ENCODE measurements at regions of chr1 and their contacts with region 1.

Region 1: DNA sequence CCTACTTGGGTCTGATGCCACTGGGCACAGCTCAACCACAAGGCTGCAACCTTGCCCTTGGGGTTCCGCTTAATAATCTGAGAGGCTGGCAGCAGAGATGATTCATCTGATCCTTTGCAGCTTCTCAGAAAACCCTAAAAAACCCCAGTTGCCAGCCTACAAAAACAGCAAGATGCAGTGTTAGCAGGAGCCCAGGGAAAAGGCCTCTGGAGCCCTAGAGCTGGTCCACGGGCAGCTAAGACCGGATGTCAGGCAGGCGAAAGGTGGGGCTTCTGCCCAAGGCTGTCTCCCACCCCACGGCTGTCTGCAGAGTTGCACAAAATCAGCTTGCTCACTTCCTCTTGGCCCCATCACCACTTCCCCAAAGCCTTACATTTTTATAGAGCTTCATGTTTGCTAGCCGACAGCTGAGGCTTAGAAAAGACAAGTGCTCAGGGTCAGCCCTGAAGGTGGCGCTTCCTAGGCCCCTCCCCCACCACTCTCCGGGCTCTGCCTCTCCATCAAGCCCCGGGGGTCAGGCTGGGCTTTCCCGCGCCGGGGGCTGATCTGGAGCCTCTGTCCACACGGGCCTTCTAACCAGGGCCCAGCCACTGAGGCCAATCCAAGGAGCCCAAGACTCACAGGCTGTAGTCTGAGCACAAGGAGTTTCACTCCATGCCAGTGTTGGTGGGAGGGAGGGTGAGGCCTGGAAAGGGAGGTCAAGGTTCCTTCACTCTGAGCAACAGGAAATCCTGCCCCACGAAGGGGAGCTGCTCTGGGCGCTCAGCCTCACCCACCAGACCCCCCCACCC is 4.2 kb upstream of the ADORA3 start:
- DNase-seq: peak; percentile 35 to 62 (median 40)
- ATAC-seq: peak; percentile 76
- H3K4me3 ChIP-seq: peak overlapping the region; percentile 53
- H3K4me3 Mint-ChIP-seq: peak overlapping the region; percentile 72 to 86 (median 82)
- H3K27ac ChIP-seq: peak overlapping the region; percentile 74
- H3K27ac Mint-ChIP-seq: peak overlapping the region in 8 of 9 donors; percentile 88 to 97 (median 94)
- H3K4me1 ChIP-seq: peaks cover 64 to 83% of the 10 kb centered on the region in 2 donors
- H3K4me1 Mint-ChIP-seq: peaks cover 42 to 65% (median 60%) of the 10 kb centered on the region in 7 donors
- H3K27me3 ChIP-seq: no peaks in the 10 kb centered on the region
- H3K27me3 Mint-ChIP-seq: no peaks in the 10 kb centered on the region

Region 2: DNA sequence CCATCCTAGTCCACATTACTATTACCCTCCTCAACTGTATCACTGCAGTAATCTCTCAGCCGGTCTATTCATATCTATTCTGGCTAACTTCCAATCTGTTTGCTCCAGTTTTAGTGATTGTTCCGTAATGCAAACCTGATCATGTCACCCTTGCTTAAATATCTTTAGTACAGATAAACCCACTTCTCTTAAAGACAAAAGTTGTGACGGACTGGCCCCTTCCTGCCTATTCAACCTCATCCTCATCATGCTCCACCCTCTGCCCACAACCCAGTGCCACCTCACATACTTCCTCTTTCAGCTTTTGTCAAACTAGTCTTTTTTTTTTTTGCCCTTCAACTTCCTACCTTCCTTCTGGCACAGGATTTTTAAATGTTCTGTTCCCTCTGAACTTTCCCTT is 36.6 kb before region 1 on chr1:
- CTCF ChIA-PET with region 1: interaction called, 83 read pairs
- POLR2A ChIA-PET with region 1: interaction called, 21 read pairs
- intact Hi-C with region 1: loop called in 1 of 2 experiments (anchors 5 kb)
- DNase-seq: peak in 8 of 9 donors; percentile 40 to 89 (median 84)
- ATAC-seq: peak; percentile 96
- H3K4me3 ChIP-seq: peak overlapping the region; percentile 37
- H3K4me3 Mint-ChIP-seq: no peak overlapping the region
- H3K27ac ChIP-seq: peak overlapping the region; percentile 68
- H3K27ac Mint-ChIP-seq: no peak overlapping the region
- H3K4me1 ChIP-seq: peaks cover 45 to 49% of the 10 kb centered on the region in 2 donors
- H3K4me1 Mint-ChIP-seq: peaks cover 10 to 26% (median 15%) of the 10 kb centered on the region in 7 donors
- H3K27me3 ChIP-seq: no peaks in the 10 kb centered on the region
- H3K27me3 Mint-ChIP-seq: no peaks in the 10 kb centered on the region

Region 3: DNA sequence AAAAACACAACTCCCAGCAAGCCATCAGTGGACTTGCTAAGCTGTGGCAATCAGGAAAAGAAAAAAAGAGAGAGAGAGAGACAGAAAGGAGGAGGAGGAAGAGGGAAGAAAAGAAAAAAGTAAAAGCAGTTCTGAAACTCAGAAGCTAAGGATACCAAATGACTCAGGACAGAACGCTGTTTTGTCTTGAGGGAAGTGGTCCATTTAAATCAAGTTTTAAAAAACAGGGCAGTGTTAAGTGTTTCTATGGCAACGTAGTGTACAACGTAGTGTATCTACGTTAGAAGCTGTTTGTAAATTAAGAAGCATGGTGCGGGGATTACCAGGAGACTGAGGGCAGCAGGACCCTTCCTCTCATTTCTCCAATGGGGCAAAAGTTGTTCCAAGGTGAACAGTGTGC is 10.0 kb before region 1 on chr1:
- CTCF ChIA-PET with region 1: interaction called, 15 read pairs
- POLR2A ChIA-PET with region 1: interaction called, 10 read pairs
- intact Hi-C with region 1: no loop called
- DNase-seq: no peak
- ATAC-seq: peak; percentile 42
- H3K4me3 ChIP-seq: no peak overlapping the region
- H3K4me3 Mint-ChIP-seq: peak overlapping the region in 1 of 10 donors; percentile 40
- H3K27ac ChIP-seq: no peak overlapping the region
- H3K27ac Mint-ChIP-seq: peak overlapping the region in 1 of 9 donors; percentile 36
- H3K4me1 ChIP-seq: no peaks in the 10 kb centered on the region
- H3K4me1 Mint-ChIP-seq: peaks cover 6 to 28% (median 13%) of the 10 kb centered on the region in 7 donors
- H3K27me3 ChIP-seq: no peaks in the 10 kb centered on the region
- H3K27me3 Mint-ChIP-seq: peaks cover 0 to 4% (median 0%) of the 10 kb centered on the region in 5 donors

Region 4: GRCh38 chr1:111582644-111583618 is 75.3 kb after region 1 on chr1:
- CTCF ChIA-PET with region 1: no interaction called
- POLR2A ChIA-PET with region 1: no interaction called
- intact Hi-C with region 1: no loop called
- DNase-seq: no peak
- ATAC-seq: no peak
- H3K4me3 ChIP-seq: no peak overlapping the region
- H3K4me3 Mint-ChIP-seq: no peak overlapping the region
- H3K27ac ChIP-seq: no peak overlapping the region
- H3K27ac Mint-ChIP-seq: no peak overlapping the region
- H3K4me1 ChIP-seq: peaks cover 5 to 9% of the 10 kb centered on the region in 2 donors
- H3K4me1 Mint-ChIP-seq: peaks cover 0 to 19% (median 7%) of the 10 kb centered on the region in 7 donors
- H3K27me3 ChIP-seq: no peaks in the 10 kb centered on the region
- H3K27me3 Mint-ChIP-seq: no peaks in the 10 kb centered on the region

Region 5: GRCh38 chr1:111619635-111620440 is 112.2 kb after region 1 on chr1 and contains the start of gene RAP1A:
- CTCF ChIA-PET with region 1: interaction called, 8 read pairs
- POLR2A ChIA-PET with region 1: interaction called, 14 read pairs
- intact Hi-C with region 1: loop called (anchors 1 kb)
- DNase-seq: peak; percentile 80 to 95 (median 90)
- ATAC-seq: peak; percentile 93
- H3K4me3 ChIP-seq: peak within 1 kb of the TSS; percentile 88
- H3K4me3 Mint-ChIP-seq: peak within 1 kb of the TSS; percentile 93 to 99 (median 96)
- H3K27ac ChIP-seq: peak within 1 kb of the TSS; percentile 91
- H3K27ac Mint-ChIP-seq: peak within 1 kb of the TSS; percentile 86 to 98 (median 95)
- H3K4me1 ChIP-seq: peaks cover 46 to 64% of the 10 kb centered on the region in 2 donors
- H3K4me1 Mint-ChIP-seq: peaks cover 57 to 82% (median 76%) of the 10 kb centered on the region in 7 donors
- H3K27me3 ChIP-seq: no peaks in the 10 kb centered on the region
- H3K27me3 Mint-ChIP-seq: no peaks in the 10 kb centered on the region
- total RNA-seq, gene RAP1A: 89.8 to 183 (median 107) TPM

Region 6: GRCh38 chr1:111656086-111657017 is 148.7 kb after region 1 on chr1:
- CTCF ChIA-PET with region 1: interaction called, 4 read pairs
- POLR2A ChIA-PET with region 1: interaction called, 5 read pairs
- intact Hi-C with region 1: loop called (anchors 1 kb)
- DNase-seq: peak in 4 of 9 donors; percentile 15 to 36 (median 20)
- ATAC-seq: no peak
- H3K4me3 ChIP-seq: no peak overlapping the region
- H3K4me3 Mint-ChIP-seq: peak overlapping the region in 6 of 10 donors; percentile 2 to 52 (median 38)
- H3K27ac ChIP-seq: no peak overlapping the region
- H3K27ac Mint-ChIP-seq: peak overlapping the region in 8 of 9 donors; percentile 9 to 84 (median 37)
- H3K4me1 ChIP-seq: peaks cover 38 to 54% of the 10 kb centered on the region in 2 donors
- H3K4me1 Mint-ChIP-seq: peaks cover 34 to 56% (median 45%) of the 10 kb centered on the region in 7 donors
- H3K27me3 ChIP-seq: no peaks in the 10 kb centered on the region
- H3K27me3 Mint-ChIP-seq: no peaks in the 10 kb centered on the region

Region 7: GRCh38 chr1:111720274-111720976 is 212.8 kb after region 1 on chr1:
- CTCF ChIA-PET with region 1: interaction called, 41 read pairs
- POLR2A ChIA-PET with region 1: interaction called, 3 read pairs
- intact Hi-C with region 1: loop called in 1 of 2 experiments (anchors 1 kb)
- DNase-seq: no peak
- ATAC-seq: no peak
- H3K4me3 ChIP-seq: no peak overlapping the region
- H3K4me3 Mint-ChIP-seq: no peak overlapping the region
- H3K27ac ChIP-seq: no peak overlapping the region
- H3K27ac Mint-ChIP-seq: peak overlapping the region in 7 of 9 donors; percentile 31 to 80 (median 52)
- H3K4me1 ChIP-seq: peaks cover 0 to 8% of the 10 kb centered on the region in 2 donors
- H3K4me1 Mint-ChIP-seq: peaks cover 9 to 31% (median 19%) of the 10 kb centered on the region in 7 donors
- H3K27me3 ChIP-seq: no peaks in the 10 kb centered on the region
- H3K27me3 Mint-ChIP-seq: no peaks in the 10 kb centered on the region

Region 8: DNA sequence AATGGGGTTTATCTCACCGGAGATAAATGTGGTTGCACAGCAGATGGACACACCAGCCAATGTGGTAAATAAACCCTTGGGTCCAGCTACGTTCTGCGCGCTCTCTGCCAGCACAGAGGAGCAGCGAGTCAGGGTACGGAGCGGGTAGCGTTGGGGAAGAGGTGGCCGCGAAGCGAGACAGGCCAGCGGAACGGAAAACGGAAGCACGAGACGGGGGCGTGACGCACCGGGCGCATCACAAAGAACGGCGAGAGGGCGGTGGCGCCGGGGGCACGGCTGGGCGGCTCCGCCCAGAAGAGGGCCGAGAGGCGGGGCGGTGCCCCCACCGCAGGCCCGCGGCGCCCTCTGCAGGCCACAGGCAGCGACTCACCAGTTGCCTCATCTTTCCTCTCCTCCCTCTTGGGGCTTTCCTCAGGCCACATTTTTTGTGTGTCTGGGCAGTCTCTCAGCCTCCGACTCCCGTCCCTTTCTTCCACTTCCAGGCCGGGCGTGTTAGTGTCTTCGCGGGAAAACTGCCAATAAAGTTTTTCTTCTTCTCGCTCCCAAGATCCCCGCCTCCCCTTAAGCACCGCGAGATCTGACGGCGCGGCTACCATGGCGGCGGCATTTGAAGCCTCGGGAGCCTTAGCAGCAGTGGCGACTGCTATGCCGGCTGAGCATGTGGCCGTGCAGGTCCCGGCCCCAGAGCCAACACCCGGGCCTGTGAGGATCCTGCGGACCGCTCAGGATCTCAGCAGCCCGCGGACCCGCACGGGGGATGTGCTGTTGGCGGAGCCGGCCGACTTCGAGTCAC is 247.9 kb after region 1 on chr1 and contains the start of gene DDX20:
- CTCF ChIA-PET with region 1: interaction called, 10 read pairs
- POLR2A ChIA-PET with region 1: interaction called, 16 read pairs
- intact Hi-C with region 1: loop called (anchors 1 kb)
- DNase-seq: peak; percentile 92 to 97 (median 95)
- ATAC-seq: peak; percentile 97
- H3K4me3 ChIP-seq: peak within 1 kb of the TSS; percentile 87
- H3K4me3 Mint-ChIP-seq: peak within 1 kb of the TSS; percentile 86 to 100 (median 94)
- H3K27ac ChIP-seq: peak within 1 kb of the TSS; percentile 92
- H3K27ac Mint-ChIP-seq: peak within 1 kb of the TSS; percentile 94 to 100 (median 99)
- H3K4me1 ChIP-seq: peaks cover 4 to 18% of the 10 kb centered on the region in 2 donors
- H3K4me1 Mint-ChIP-seq: peaks cover 24 to 49% (median 39%) of the 10 kb centered on the region in 7 donors
- H3K27me3 ChIP-seq: no peaks in the 10 kb centered on the region
- H3K27me3 Mint-ChIP-seq: peaks cover 0 to 2% (median 0%) of the 10 kb centered on the region in 5 donors
- total RNA-seq, gene DDX20: 12.7 to 27.0 (median 18.7) TPM

Measured in naive thymus-derived CD4-positive, alpha-beta T cell (primary cell).